Activated CD4-positive, alpha-beta T cell treated with anti-CD3 and anti-CD28 coated beads for 36 hours (primary cell): ENCODE measurements at regions of chr3 and their contacts with region 1.

Region 1: DNA sequence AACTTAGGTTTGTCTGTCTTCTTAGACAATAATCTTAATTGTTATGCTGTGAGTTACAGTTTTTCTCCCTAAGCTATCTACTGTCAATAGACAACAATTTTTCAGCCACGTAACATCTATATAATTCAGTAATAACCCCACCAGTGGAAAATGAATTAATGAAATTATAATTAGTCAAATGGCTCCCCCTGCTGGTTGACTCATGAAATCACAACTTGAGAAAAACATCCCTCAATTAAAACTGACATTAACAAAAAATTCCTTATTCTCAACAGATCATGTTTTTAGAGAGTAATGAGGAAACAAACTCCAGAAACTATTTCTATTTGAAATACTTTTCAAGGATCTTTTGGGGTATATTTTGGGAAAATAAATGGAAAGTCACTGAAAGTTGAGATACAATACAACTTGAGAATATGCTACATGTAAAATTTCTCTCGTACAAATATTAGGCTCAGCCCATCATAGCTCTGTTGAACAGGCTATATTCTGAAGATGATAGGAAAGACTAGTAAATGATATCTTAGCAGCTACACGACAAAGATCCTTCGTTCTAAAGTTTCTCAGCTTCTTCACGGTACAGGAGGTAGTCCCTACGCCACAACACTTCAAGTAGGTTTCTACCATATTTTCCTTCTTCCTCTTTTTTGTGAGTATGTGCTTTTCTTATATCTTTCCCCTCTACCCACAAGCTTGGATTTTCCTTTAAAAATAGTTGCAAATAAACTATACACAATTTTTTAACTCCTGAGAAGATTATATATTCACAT is 20.7 kb downstream of the PPP1R2 start:
- DNase-seq: peak; percentile 31
- ATAC-seq: no peak
- H3K4me3 Mint-ChIP-seq: no peak overlapping the region
- H3K27ac Mint-ChIP-seq: peak overlapping the region; percentile 59
- H3K4me1 Mint-ChIP-seq: peaks cover 42% of the 10 kb centered on the region
- H3K27me3 Mint-ChIP-seq: no peaks in the 10 kb centered on the region

Region 2: DNA sequence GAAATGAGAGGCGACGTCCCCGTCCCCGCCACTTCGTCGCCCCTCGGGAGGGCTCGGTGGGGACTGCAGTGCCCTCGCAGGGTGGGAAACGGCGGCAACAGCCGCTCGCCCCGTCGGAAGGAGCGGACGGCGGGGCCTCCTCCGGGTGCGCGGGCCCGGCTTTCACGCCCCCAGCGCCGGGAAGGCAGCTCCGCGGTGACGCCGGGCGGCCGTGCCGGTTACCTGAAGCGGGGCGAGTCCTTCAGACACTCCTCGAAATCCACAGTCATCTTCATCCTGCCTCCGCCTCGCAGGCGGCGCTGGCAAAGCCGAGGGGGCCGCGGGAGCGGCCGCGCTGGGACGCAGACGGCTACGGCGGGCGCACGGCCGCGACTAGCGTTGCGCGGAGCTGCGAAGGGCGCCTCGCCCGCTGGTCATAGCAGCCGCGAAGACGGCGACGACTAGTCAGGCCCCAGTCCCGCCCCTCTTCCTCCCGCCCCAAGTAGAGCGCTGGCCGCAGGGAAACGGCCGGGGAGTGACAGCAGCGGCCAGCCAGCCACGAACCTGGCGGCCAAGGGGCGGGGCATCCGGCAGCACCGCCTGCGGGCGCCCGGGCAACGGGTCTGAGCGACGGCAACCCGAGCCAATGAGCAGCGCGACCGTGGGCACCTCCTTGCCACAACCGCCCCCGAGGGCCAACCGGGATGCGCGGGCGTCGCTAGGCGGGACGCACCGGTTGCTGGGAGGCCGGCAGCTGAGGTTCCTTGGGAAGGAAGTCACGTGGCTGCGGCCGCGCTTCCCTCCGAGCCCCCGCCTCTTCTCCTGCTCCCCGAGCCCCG is 79.7 kb before region 1 on chr3 and contains the start of gene ACAP2:
- CTCF ChIA-PET with region 1: interaction called, 4 read pairs
- POLR2A ChIA-PET with region 1: no interaction called
- intact Hi-C with region 1: loop called (anchors 2 to 5 kb)
- DNase-seq: peak; percentile 99
- ATAC-seq: peak; percentile 96
- H3K4me3 Mint-ChIP-seq: peak within 1 kb of the TSS; percentile 96
- H3K27ac Mint-ChIP-seq: peak within 1 kb of the TSS; percentile 91
- H3K4me1 Mint-ChIP-seq: peaks cover 44% of the 10 kb centered on the region
- H3K27me3 Mint-ChIP-seq: no peaks in the 10 kb centered on the region
- total RNA-seq, gene ACAP2: 43.7 to 51.9 TPM

Region 3: DNA sequence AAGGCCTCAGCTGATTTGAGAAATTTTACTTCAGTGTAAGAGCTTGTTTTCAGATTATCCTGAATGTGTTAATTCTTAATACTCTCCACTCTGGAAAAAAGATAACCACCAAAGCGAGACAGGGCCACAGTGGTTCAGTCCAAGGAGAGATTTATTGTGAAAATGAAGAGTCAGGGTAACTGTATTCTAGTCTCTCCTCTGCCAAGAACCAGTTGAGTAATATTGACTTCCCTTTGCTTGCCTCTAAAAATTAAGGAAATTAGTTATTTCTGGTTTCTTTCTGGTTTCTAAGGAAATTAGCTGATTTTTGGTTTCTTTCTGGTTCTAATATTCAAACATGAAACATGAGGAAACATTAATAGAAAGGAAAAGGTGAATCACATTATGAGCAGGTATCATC is 14.3 kb before region 1 on chr3:
- CTCF ChIA-PET with region 1: interaction called, 11 read pairs
- POLR2A ChIA-PET with region 1: no interaction called
- intact Hi-C with region 1: no loop called
- DNase-seq: no peak
- ATAC-seq: no peak
- H3K4me3 Mint-ChIP-seq: no peak overlapping the region
- H3K27ac Mint-ChIP-seq: peak overlapping the region; percentile 38
- H3K4me1 Mint-ChIP-seq: peaks cover 22% of the 10 kb centered on the region
- H3K27me3 Mint-ChIP-seq: no peaks in the 10 kb centered on the region

Region 4: DNA sequence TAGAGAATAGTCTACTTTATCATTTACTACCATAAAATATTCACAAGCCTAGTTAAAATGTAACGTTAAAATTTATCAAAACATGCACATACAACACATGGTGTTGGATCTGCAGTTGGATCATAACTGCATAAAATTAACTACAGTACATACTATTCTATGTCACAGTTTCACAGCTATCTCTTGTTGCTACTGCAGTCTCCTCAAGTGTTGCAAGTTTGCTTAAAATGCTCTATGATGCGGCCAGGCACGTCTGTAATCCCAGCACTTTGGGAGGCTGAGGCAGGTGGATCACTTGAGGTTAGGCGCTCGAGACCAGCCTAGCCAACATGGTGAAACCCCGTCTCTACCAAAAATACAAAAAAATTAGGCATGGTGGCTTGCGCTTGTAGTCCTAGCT is 10.4 kb after region 1 on chr3:
- CTCF ChIA-PET with region 1: interaction called, 25 read pairs
- POLR2A ChIA-PET with region 1: interaction called, 4 read pairs
- intact Hi-C with region 1: loop called (anchors 1 to 2 kb)
- DNase-seq: no peak
- ATAC-seq: peak; percentile 21
- H3K4me3 Mint-ChIP-seq: no peak overlapping the region
- H3K27ac Mint-ChIP-seq: peak overlapping the region; percentile 20
- H3K4me1 Mint-ChIP-seq: peaks cover 87% of the 10 kb centered on the region
- H3K27me3 Mint-ChIP-seq: no peaks in the 10 kb centered on the region

Region 5: GRCh38 chr3:195558602-195559001 is 36.2 kb after region 1 on chr3:
- CTCF ChIA-PET with region 1: interaction called, 4 read pairs
- POLR2A ChIA-PET with region 1: interaction called, 12 read pairs
- intact Hi-C with region 1: no loop called
- DNase-seq: peak; percentile 39
- ATAC-seq: peak; percentile 65
- H3K4me3 Mint-ChIP-seq: no peak overlapping the region
- H3K27ac Mint-ChIP-seq: no peak overlapping the region
- H3K4me1 Mint-ChIP-seq: peaks cover 37% of the 10 kb centered on the region
- H3K27me3 Mint-ChIP-seq: no peaks in the 10 kb centered on the region

Region 6: DNA sequence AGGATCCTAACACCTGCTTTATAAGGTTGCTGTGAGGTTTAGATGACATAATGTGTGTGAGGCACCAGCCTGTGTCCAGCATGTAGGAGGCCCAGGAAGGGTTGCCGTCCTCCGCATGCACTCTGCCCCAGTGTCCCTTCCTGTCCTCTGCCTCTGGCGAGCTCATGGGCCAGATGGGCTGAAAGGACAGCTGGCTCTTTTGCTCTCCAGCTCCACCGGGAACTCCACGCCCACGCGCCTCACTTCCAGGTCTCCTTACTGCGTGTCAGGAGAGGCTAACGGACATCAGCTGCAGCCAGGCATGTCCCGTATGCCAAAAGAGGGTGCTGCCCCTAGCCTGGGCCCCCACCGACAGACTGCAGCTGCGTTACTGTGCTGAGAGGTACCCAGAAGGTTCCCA is 210.5 kb after region 1 on chr3:
- CTCF ChIA-PET with region 1: no interaction called
- POLR2A ChIA-PET with region 1: no interaction called
- intact Hi-C with region 1: no loop called
- DNase-seq: no peak
- ATAC-seq: no peak
- H3K4me3 Mint-ChIP-seq: no peak overlapping the region
- H3K27ac Mint-ChIP-seq: no peak overlapping the region
- H3K4me1 Mint-ChIP-seq: no peaks in the 10 kb centered on the region
- H3K27me3 Mint-ChIP-seq: no peaks in the 10 kb centered on the region